GM13977 (cell line): ENCODE measurements at regions of chr14 and their contacts with region 1.

Region 1: DNA sequence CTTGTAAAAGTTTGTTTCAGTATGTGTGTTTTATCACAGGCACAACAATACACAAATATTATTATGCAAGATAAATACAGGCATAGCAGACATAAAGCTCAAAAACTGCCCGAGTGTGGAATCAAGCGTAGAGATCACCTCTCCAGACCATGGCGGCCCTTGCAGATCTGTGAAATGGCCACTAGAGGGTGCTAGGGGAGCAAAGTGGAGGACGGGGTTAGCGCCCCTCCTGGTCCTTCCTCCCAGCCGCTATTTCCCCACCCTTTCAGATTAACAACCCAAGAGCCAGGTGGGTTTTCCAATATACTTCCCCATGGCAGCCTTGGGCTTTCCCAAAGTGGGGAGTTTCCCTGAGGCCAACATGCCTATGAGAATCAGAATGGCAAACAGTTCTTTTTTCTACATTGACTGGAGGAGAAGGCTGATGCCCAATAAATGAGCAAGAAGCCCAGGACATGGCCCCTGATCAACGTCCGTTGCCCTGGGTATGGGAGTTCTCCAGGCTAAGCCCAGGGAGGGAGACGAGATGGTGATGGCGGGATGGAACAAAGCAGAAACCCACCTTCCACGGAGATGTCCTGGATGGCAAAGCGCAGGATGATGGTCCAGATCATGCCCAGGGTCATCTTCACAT is 67.4 kb downstream of the ACTN1 start:
- DNase-seq: peak; percentile 89
- CTCF ChIP-seq: peak; percentile 91

Region 2: DNA sequence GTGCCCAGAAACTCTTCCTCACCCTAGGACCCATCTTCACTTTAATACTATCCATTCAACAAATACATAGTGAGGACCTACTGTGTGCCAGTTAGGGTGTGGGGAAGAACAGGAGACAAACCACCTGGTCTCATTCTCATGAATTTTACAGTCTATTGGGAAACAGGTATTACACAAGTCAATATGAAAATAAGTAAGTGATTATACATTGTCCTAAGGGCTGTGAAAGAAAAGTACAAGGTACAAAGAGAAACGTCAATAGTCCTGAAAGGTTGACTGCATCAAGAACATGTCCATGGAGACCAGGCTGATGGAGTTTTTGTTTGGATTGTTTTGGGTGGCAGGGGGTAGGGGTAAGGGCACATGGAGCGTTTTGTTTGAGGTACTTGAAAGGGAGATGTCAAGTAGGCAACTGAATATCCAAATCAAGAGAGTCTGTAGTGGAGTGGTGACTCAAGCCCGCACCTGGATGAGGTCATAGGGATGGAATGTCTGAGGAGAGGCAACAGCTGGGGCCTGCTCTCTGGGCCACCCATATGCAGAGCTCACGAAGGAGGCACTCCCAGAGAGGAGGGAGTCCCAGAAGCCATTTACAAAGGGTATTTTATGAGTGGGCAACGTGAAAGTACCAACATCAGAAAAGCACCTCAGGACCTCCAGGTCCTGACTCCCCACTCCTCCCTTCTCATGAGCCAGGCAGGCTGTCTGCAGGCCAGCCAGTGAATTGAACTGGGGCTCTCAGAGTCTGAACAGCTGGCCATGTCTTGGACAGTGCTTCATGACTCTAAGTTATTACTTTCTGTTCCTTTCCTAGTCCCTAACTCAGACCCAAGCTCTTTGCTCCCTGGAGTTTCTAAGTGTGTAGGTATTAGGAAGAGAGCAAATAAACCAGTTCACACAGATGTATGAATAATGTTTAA is 390.8 kb before region 1 on chr14:
- in situ Hi-C with region 1: no loop called
- DNase-seq: no peak
- CTCF ChIP-seq: no peak

Region 3: DNA sequence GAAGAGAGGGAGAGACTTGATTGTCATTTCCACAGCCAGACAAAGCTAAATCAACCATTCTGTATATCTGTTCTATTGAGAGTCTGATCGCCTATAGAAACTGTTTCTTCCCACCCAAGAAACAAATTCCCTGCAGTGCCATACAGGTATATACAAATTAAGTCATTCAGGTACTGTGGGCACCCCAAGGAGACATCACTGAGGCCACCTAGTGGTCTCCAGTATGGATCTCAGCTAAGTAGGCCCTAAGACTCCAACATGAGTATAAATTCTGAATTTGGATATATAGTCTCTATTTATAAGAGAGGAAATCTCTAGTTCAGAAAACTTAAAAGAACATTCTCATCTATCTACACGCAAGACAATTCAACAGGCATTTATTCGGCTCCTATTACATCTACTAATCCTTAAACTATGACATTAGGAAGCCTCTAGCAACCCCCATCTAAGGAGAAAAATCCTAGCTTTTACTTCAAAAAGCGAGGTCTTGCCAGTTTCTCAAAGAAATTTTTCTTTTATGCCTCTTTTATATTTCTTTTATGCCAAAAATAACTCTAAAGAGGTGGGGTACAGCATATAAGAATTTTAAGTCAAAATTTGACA is 178.6 kb after region 1 on chr14:
- in situ Hi-C with region 1: loop called (anchors 25 kb)
- DNase-seq: no peak
- CTCF ChIP-seq: peak; percentile 54